ENCODE measurements at regions of chr10 and their contacts with region 1.

Region 1: DNA sequence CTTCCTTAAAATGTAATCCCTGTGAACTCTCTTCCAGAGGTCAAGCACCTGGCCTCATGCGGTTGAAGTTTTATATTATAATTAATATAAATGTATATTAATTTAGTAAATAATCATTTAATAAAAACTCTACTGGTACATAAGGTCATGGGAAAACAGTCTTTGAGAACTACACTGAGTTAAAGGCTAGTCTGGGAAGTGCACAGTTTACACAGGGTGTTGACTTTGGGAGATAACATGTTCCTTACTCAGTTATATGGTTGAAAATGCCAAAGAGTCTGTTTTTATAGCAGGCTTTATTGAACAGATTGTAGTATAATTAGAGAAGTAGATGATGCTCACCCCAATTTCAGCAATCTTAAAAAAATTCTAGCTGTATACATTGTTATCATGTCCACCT is 735.9 kb downstream of the GATA3 start:
- DNase-seq: no peak
- H3K4me3 ChIP-seq: no peak overlapping the region
- CTCF ChIP-seq: no peak

Region 2: GRCh38 chr10:8840356-8840755 is 50.0 kb after region 1 on chr10:
- in situ Hi-C with region 1: no loop called
- DNase-seq: no peak
- H3K4me3 ChIP-seq: no peak overlapping the region
- CTCF ChIP-seq: no peak

Region 3: GRCh38 chr10:8874972-8875371 is 84.6 kb after region 1 on chr10:
- in situ Hi-C with region 1: loop called (anchors 5 kb)
- DNase-seq: no peak
- H3K4me3 ChIP-seq: no peak overlapping the region
- CTCF ChIP-seq: no peak

Region 4: GRCh38 chr10:10313149-10313840 is 1522.9 kb after region 1 on chr10:
- in situ Hi-C with region 1: no loop called
- DNase-seq: no peak
- H3K4me3 ChIP-seq: no peak overlapping the region
- CTCF ChIP-seq: no peak

Measured in astrocyte of the cerebellum (primary cell).